Right ventricle myocardium inferior (tissue), 1 donor: ENCODE measurements at regions of chr5 and their contacts with region 1.

Region 1: DNA sequence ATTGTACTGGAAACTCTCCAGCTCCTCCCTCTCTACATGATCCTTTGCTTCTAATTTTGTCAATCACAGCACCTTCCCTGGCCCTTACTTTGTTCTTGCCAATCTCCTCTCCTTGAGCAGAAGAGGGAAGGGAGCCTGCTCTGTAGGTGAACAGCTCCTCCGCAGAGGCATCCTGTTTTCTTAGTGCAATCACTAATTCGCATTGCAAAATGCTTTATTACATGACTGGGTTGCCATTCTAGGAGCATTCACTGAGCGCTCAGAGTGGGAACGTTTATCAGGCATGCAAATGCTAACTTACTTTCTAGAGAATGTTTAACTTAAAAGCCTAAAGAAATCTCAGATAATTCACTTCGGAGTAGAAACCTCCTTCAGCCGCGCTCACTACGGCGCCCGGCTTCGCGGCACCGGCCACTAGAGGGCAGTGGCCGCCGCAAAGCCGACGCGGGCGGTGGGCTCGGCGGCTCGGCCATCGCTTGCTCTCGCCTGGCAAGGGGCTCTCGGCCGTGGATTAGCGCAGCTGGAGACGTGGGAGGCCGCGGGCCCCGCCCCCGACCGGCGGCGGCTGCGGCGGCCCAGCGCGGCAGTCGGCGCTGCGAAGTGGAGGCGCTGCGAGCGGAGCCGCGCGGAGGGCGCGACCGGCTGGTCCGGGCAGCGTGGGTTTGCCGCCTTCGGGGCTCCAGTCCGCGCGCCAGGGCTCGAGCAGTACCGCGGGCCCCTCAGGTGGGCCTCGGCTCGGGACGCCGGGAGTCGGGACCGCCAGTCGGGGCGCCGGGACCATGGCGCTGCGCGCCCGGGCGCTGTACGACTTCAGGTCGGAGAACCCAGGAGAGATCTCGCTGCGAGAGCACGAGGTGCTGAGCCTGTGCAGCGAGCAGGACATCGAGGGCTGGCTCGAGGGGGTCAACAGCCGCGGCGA is at the start of gene SNX18:
- DNase-seq: peak; percentile 97
- ATAC-seq: peak; percentile 95
- total RNA-seq, gene SNX18: 25.2 TPM

Region 2: DNA sequence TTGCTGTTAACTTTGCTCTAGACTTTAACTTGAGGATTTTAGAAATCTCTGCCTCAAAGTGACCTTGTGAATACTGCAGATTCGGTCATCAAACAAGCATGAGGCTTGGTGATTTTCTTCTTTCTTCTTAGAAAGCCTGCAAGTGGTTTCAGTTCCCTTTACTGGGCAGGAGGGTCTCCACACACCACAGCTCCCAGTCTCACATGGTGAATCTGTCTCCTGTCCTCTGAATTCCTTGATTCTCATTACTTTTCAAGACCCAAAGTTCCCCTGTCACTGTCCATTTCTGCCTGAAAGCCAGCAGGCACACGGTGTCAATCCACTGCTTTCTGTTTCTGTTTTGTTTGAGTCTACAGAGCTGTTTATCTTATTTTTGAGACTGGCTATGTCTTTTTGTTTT is 47.8 kb before region 1 on chr5:
- intact Hi-C with region 1: no loop called
- DNase-seq: no peak
- ATAC-seq: peak; percentile 28

Region 3: DNA sequence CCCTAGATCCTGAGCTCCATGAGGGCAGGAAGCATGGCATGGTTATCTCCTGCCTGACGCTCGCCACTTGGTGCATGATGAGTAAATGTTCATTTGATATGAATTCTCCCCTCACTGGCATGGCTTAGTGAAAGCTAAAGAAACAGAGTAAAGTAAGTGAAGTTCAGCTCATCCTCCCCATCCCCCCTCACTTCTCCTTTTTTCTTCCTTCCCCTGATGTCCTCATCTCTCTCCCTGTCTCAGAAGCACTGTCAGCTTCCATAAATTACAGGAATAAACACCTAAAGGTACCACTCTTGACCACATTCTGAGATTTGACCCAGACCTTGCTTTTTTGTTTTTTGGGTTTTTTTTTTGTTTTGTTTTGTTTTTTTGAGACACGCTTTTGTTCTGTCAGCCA is 73.4 kb after region 1 on chr5:
- intact Hi-C with region 1: no loop called
- DNase-seq: no peak
- ATAC-seq: no peak

Region 4: GRCh38 chr5:54646356-54647101 is 129.1 kb after region 1 on chr5:
- intact Hi-C with region 1: loop called (anchors 2 kb)
- DNase-seq: peak; percentile 88
- ATAC-seq: peak; percentile 98

Region 5: DNA sequence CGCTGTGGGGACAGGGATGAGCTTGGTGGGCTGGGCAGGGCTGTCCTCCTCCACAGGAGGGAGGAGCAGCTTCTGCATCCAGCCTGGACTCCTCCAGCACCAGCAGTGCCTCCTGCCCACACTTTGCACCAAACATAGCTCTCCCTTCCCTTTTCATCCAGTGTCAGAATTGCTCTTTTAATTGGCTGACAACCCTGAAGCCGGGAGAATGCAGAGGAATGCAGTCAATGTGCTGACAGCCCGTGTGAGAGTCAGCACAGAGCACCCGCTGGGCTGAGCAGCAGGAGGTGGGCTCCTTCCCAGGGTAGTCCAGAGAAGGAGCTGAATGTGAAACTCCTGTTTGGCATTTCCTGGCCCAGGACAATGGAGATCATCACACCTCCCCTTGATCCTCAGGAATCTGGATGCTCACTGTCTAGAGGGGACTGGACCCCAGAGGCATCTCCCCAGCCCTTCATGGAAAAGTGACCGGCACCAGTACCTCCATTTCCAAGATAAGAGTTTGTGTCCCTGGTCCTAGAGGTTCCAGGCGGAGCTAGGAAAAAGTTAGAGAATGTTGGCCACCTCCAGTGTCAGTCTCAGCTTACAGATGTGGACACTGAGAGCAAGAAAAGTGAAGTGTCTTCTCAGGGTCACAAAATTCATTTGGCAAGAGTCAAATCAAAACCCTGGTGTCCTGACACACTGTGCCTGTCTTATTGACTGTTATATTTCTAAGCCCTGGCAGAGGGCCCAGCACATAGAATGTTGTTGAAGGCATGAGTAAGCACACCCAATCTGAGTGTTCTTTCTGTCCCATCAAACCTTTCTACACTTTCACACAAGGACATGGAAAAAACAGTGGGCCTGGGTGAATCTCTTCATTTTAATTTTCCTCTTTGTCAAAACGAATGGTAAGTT is 202.2 kb after region 1 on chr5:
- intact Hi-C with region 1: loop called (anchors 2 kb)
- DNase-seq: peak; percentile 74
- ATAC-seq: peak; percentile 90

Region 6: GRCh38 chr5:54844905-54845566 is 327.6 kb after region 1 on chr5:
- intact Hi-C with region 1: loop called (anchors 1 kb)
- DNase-seq: no peak
- ATAC-seq: no peak